Dendritic cell treated with granulocyte-macrophage colony-stimulating factor and Interleukin-4, amounts not matched to agents 40 ng/mL and 50 ng/mL, for 4 days (primary cell): ENCODE measurements at regions of chr2 and their contacts with region 1.

Region 1: DNA sequence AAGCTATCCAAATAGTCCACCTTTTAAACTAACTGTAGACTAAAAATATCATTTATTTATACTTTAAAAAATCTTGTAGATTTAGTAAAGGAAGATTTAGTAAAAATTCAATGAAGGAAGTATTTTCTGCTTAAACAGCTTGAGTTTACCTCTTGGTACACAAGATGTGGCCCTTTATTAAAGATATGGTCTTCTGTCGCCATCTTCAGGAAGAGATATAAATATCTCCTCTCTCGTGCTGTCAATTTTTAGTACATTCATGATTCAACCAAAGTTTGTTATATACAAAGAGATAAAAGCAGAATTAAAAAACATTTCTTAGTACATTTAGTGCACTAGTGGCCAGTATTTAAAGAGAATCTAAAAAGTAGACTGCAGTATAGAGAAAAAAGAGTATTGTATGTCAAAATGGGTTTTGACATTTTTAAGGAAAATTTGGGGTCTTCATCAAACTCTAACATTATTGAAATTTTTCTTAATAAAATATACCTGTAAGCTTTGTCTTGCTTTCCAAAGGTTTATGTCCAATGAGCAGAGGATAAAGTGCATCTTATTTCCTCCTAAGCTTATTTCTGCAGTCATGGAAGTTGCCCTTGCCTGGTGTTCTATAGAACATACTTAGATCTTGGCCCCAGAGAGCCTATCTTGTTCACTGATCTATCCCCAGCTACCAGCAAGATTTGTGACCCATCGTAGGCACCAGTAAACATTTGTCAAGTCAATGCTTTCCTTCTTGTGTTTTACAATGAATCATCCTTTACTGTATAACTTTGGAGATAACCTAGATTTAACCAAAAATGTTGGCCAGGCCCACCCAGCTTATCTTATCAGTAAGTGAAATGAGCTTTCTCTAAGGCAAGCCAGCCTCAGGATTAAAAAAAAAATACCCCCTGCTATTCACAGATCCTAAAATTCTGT is 18.5 kb upstream of the EML6 start:
- H3K4me3 Mint-ChIP-seq: no peak overlapping the region
- H3K27ac Mint-ChIP-seq: no peak overlapping the region
- H3K4me1 Mint-ChIP-seq: peaks cover 15% of the 10 kb centered on the region
- H3K27me3 Mint-ChIP-seq: peaks cover 32% of the 10 kb centered on the region

Region 2: GRCh38 chr2:54106631-54107454 is 598.1 kb before region 1 on chr2:
- intact Hi-C with region 1: loop called (anchors 5 kb)
- H3K4me3 Mint-ChIP-seq: no peak overlapping the region
- H3K27ac Mint-ChIP-seq: no peak overlapping the region
- H3K4me1 Mint-ChIP-seq: no peaks in the 10 kb centered on the region
- H3K27me3 Mint-ChIP-seq: peaks cover 2% of the 10 kb centered on the region

Region 3: DNA sequence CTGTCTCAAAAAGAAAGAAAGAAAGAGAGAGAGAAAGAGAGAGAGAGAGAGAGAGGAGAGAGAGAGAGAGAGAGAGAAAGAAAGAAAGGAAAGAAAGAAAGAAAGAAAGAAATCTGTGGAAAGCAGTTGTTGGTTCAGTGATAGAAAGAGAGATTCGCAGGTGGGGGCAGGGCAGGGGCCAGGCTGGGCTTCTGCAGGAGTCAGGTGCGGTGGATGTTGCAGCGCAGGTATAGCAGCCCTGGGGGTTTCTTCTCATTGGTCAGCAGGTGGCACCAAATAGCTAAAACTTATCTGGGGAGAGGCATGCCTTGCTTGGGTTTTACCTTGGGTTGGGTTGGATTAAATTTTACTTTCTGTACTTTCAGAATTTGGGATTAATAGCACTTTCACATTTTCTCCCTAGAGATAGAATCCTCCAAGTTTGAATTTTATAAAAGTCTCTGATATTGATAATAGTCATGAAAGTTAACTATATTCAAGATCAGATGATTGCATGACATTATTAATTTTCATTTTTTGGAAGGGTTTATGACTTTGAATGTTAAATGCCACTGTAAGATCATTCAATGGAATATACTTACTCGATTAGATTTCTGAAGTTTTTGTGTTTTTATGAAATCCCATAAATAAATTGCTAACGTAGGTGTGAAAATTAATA is 182.2 kb before region 1 on chr2:
- intact Hi-C with region 1: loop called (anchors 1 kb)
- H3K4me3 Mint-ChIP-seq: no peak overlapping the region
- H3K27ac Mint-ChIP-seq: no peak overlapping the region
- H3K4me1 Mint-ChIP-seq: peaks cover 17% of the 10 kb centered on the region
- H3K27me3 Mint-ChIP-seq: peaks cover 6% of the 10 kb centered on the region

Region 4: GRCh38 chr2:54657664-54658083 is 47.3 kb before region 1 on chr2:
- intact Hi-C with region 1: loop called (anchors 1 kb)
- H3K4me3 Mint-ChIP-seq: no peak overlapping the region
- H3K27ac Mint-ChIP-seq: no peak overlapping the region
- H3K4me1 Mint-ChIP-seq: no peaks in the 10 kb centered on the region
- H3K27me3 Mint-ChIP-seq: no peaks in the 10 kb centered on the region

Region 5: DNA sequence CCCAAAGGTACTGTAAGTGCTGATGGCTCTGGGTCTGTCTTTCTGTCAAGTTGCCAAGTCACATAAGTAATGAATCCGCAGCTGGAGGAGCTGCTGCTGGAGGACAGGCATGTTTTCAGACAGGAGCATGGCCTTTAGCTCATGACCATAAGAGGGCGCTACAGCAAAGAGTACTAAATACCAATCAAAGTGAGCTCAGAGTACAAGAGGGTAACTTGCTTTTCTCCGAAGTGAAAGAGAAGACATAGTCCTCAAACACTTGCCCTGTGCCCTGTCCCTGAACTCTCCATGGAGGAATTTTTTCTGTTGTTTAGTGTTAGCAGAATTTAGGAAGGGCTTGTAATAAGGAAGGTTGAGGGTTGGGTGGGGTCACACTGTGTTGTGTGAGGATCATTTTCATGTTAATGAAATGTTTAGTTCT is 39.5 kb before region 1 on chr2:
- intact Hi-C with region 1: loop called (anchors 2 kb)
- H3K4me3 Mint-ChIP-seq: no peak overlapping the region
- H3K27ac Mint-ChIP-seq: no peak overlapping the region
- H3K4me1 Mint-ChIP-seq: peaks cover 29% of the 10 kb centered on the region
- H3K27me3 Mint-ChIP-seq: peaks cover 1% of the 10 kb centered on the region

Region 6: GRCh38 chr2:54838585-54839035 is 133.7 kb after region 1 on chr2:
- intact Hi-C with region 1: loop called (anchors 5 kb)
- H3K4me3 Mint-ChIP-seq: no peak overlapping the region
- H3K27ac Mint-ChIP-seq: no peak overlapping the region
- H3K4me1 Mint-ChIP-seq: no peaks in the 10 kb centered on the region
- H3K27me3 Mint-ChIP-seq: no peaks in the 10 kb centered on the region